Panc1 (cell line): ENCODE measurements at regions of chr1 and their contacts with region 1.

Region 1: GRCh38 chr1:15847100-15847892 is at the start of gene SPEN:
- DNase-seq: peak; percentile 76
- ATAC-seq: peak; percentile 87
- H3K4me3 ChIP-seq: peak within 1 kb of the TSS; percentile 98
- H3K27ac ChIP-seq: peak within 1 kb of the TSS; percentile 99
- H3K4me1 ChIP-seq: peaks cover 32% of the 10 kb centered on the region
- H3K27me3 ChIP-seq: no peaks in the 10 kb centered on the region
- CTCF ChIP-seq: no peak
- total RNA-seq, gene SPEN: 58.3 TPM

Region 2: DNA sequence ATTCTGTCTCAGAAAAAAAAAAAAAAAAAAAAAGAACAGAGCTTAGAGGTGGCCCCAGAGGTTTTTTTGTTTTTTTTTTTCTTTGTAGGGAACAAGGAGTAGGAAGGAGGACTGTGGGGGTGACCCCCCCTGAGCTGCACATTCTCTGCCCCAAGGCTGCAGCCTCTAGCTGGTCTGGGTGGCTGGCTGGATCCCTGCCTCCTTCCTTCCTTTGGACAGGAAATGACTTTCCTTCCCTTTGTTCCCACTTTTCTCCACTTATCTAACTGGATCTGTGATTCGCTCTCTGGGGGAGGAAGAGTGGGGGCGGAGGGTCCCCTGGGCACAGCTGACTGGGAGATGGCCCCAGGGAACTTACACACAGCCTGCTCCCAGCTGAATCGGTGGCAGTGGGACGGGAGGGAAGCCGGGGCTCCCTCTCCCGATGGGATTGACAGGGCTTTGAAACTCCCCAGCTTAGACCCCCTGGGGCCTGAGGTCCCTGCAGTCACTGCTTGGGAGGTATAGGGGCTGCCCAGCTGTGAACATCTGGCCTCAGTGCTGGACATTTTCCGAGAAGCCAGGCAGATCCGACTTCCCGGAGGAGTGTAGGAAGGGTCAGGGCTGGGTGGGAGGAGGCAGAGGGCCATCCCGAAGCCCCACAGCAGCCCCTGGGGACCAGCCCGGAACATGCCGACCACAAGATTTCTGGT is 86.6 kb before region 1 on chr1:
- CTCF ChIA-PET with region 1: no interaction called
- POLR2A ChIA-PET with region 1: no interaction called
- in situ Hi-C with region 1: no loop called
- intact Hi-C with region 1: no loop called
- DNase-seq: no peak
- ATAC-seq: peak; percentile 15
- H3K4me3 ChIP-seq: peak overlapping the region in 1 of 2 experiments; percentile 8; a peak in 1 of 4 replicates
- H3K27ac ChIP-seq: peak overlapping the region; percentile 36
- H3K4me1 ChIP-seq: peaks cover 30% of the 10 kb centered on the region
- H3K27me3 ChIP-seq: no peaks in the 10 kb centered on the region
- CTCF ChIP-seq: no peak

Region 3: DNA sequence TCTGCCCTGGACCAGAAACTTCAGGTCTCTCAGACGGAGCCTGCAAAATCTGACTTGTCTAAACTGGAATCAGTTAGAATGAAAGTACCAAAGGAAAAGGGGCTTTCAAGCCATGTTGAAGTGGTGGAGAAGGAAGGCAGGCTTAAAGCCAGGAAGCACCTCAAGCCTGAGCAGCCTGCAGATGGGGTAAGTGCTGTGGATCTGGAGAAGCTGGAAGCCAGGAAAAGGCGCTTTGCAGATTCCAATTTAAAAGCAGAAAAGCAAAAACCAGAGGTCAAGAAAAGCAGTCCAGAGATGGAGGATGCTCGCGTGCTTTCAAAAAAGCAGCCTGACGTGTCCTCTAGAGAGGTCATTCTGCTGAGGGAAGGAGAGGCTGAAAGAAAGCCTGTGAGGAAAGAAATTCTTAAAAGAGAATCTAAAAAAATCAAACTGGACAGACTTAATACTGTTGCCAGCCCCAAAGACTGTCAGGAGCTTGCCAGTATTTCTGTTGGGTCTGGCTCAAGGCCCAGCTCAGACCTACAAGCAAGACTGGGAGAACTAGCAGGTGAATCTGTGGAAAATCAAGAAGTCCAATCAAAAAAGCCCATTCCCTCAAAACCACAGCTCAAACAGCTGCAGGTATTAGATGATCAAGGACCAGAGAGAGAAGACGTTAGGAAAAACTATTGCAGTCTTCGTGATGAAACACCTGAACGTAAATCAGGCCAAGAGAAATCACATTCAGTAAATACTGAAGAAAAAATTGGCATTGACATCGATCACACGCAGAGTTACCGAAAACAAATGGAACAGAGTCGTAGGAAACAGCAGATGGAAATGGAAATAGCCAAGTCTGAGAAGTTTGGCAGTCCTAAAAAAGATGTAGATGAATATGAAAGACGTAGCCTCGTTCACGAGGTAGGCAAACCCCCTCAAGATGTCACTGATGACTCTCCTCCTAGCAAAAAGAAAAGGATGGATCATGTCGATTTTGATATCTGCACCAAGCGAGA is 82.0 kb after region 1 on chr1:
- CTCF ChIA-PET with region 1: no interaction called
- POLR2A ChIA-PET with region 1: interaction called, 22 read pairs
- in situ Hi-C with region 1: no loop called
- intact Hi-C with region 1: no loop called
- DNase-seq: no peak
- ATAC-seq: no peak
- H3K4me3 ChIP-seq: no peak overlapping the region
- H3K27ac ChIP-seq: no peak overlapping the region
- H3K4me1 ChIP-seq: no peaks in the 10 kb centered on the region
- H3K27me3 ChIP-seq: no peaks in the 10 kb centered on the region
- CTCF ChIP-seq: no peak

Region 4: GRCh38 chr1:16307222-16307621 is 459.9 kb after region 1 on chr1:
- CTCF ChIA-PET with region 1: no interaction called
- POLR2A ChIA-PET with region 1: no interaction called
- in situ Hi-C with region 1: no loop called
- intact Hi-C with region 1: no loop called
- DNase-seq: no peak
- ATAC-seq: no peak
- H3K4me3 ChIP-seq: no peak overlapping the region
- H3K27ac ChIP-seq: no peak overlapping the region
- H3K4me1 ChIP-seq: no peaks in the 10 kb centered on the region
- H3K27me3 ChIP-seq: no peaks in the 10 kb centered on the region
- CTCF ChIP-seq: no peak

Region 5: GRCh38 chr1:16351466-16351993 is 504.2 kb after region 1 on chr1:
- CTCF ChIA-PET with region 1: no interaction called
- POLR2A ChIA-PET with region 1: interaction called, 12 read pairs
- in situ Hi-C with region 1: no loop called
- intact Hi-C with region 1: no loop called
- DNase-seq: no peak
- ATAC-seq: no peak
- H3K4me3 ChIP-seq: peak overlapping the region; percentile 75
- H3K27ac ChIP-seq: peak overlapping the region; percentile 85
- H3K4me1 ChIP-seq: peaks cover 29% of the 10 kb centered on the region
- H3K27me3 ChIP-seq: no peaks in the 10 kb centered on the region
- CTCF ChIP-seq: no peak